ENCODE measurements at regions of chr14 and their contacts with region 1.

Region 1: GRCh38 chr14:68248481-68249255 is 429.1 kb downstream of the RAD51B start:
- DNase-seq: peak; percentile 80
- ATAC-seq: peak; percentile 83
- H3K4me3 ChIP-seq: no peak overlapping the region
- H3K4me3 Mint-ChIP-seq: peak overlapping the region; percentile 5
- H3K27ac ChIP-seq: peak overlapping the region; percentile 39 to 73
- H3K27ac Mint-ChIP-seq: peak overlapping the region; percentile 88
- H3K4me1 ChIP-seq: peaks cover 40 to 54% of the 10 kb centered on the region in 2 donors
- H3K4me1 Mint-ChIP-seq: peaks cover 65% of the 10 kb centered on the region
- H3K27me3 ChIP-seq: no peaks in the 10 kb centered on the region
- H3K27me3 Mint-ChIP-seq: no peaks in the 10 kb centered on the region
- CTCF ChIP-seq: peak; percentile 85

Region 2: DNA sequence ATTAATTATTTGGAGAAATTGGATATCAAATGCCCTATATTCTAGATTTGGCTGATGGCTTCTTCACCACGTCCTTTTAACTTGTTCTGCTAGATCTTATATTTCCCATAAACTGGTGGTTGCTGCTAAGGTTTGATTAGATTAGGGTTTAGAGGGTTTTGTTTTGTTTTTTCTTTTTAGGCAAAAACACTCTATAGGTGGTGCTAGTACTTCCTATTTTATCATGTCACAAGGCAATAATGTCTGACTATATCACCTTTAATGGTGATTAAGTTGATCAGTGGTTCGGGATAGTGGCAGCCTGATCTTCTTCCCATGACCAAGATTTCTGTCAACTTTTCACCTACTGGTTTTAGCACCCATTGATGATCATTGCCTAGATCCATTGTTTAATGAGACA is 26.1 kb after region 1 on chr14:
- CTCF ChIA-PET with region 1: interaction called, 110 read pairs
- POLR2A ChIA-PET with region 1: interaction called, 6 read pairs
- intact Hi-C with region 1: no loop called
- DNase-seq: peak; percentile 55
- ATAC-seq: no peak
- H3K4me3 ChIP-seq: peak overlapping the region in 1 of 5 experiments; percentile 12
- H3K4me3 Mint-ChIP-seq: peak overlapping the region; percentile 80
- H3K27ac ChIP-seq: peak overlapping the region; percentile 88 to 91
- H3K27ac Mint-ChIP-seq: peak overlapping the region; percentile 98
- H3K4me1 ChIP-seq: peaks cover 92 to 93% of the 10 kb centered on the region in 2 donors
- H3K4me1 Mint-ChIP-seq: peaks cover 87% of the 10 kb centered on the region
- H3K27me3 ChIP-seq: no peaks in the 10 kb centered on the region
- H3K27me3 Mint-ChIP-seq: no peaks in the 10 kb centered on the region
- CTCF ChIP-seq: peak; percentile 33

Region 3: DNA sequence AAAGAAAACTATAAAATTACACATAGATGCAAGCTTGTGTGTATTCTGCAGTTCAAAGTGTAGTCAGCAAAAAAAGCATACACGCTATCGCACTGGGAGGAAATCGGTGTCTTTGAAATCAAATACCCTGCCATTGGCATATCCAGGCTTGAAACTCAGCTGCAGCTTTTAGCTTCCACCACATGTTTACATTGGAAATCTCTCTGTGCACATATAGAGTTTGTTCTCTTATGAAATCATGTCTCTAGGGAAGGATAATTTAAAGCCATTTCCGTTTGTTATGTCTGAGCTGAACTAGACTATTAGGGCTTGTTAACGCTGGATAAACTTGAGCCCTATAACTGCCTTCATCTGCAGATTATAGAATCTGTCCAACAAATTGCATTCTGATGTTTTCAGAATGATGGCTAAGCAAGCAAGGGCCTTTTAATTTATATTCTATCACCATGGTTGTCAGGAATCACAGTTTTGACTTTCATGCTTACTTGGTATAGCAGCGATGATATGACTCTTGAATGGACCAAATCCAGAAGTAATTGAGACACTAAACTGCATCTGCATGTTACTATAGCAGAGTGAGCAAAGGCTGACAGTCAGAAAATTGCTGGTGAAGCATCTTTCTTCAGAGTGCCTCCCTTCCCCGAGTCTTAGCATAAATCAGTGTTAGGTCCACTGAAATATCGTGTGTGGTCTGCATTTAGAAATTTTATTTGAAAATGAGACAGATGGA is 101.4 kb after region 1 on chr14:
- CTCF ChIA-PET with region 1: interaction called, 32 read pairs
- POLR2A ChIA-PET with region 1: no interaction called
- intact Hi-C with region 1: no loop called
- DNase-seq: no peak
- ATAC-seq: no peak
- H3K4me3 ChIP-seq: no peak overlapping the region
- H3K4me3 Mint-ChIP-seq: no peak overlapping the region
- H3K27ac ChIP-seq: no peak overlapping the region
- H3K27ac Mint-ChIP-seq: no peak overlapping the region
- H3K4me1 ChIP-seq: peaks cover 7 to 13% of the 10 kb centered on the region in 2 donors
- H3K4me1 Mint-ChIP-seq: peaks cover 38% of the 10 kb centered on the region
- H3K27me3 ChIP-seq: no peaks in the 10 kb centered on the region
- H3K27me3 Mint-ChIP-seq: no peaks in the 10 kb centered on the region
- CTCF ChIP-seq: no peak

Region 4: DNA sequence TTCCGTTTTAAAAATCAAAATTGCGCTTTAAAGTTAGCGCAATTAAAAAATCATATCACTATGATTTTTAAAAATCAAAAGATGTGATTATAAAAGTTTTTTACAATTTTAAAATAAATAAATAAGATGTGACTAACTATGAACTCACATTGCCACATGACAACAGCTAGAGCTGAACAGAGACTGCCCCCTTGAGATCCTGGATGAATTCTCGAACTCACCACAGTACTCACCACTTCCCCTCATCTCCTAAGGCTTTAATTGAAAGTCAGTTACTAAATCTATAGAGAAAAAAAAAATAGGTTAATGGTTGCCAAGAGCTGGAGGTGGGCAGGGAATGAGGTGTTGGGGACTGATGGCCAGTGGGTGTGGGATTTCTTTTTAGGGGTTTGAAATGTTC is 160.0 kb after region 1 on chr14:
- CTCF ChIA-PET with region 1: interaction called, 31 read pairs
- POLR2A ChIA-PET with region 1: interaction called, 4 read pairs
- intact Hi-C with region 1: loop called (anchors 1 kb)
- DNase-seq: peak; percentile 62
- ATAC-seq: peak; percentile 46
- H3K4me3 ChIP-seq: no peak overlapping the region
- H3K4me3 Mint-ChIP-seq: no peak overlapping the region
- H3K27ac ChIP-seq: peak overlapping the region; percentile 30 to 60
- H3K27ac Mint-ChIP-seq: peak overlapping the region; percentile 84
- H3K4me1 ChIP-seq: peaks cover 57 to 60% of the 10 kb centered on the region in 2 donors
- H3K4me1 Mint-ChIP-seq: peaks cover 61% of the 10 kb centered on the region
- H3K27me3 ChIP-seq: no peaks in the 10 kb centered on the region
- H3K27me3 Mint-ChIP-seq: no peaks in the 10 kb centered on the region
- CTCF ChIP-seq: peak; percentile 24

Region 5: DNA sequence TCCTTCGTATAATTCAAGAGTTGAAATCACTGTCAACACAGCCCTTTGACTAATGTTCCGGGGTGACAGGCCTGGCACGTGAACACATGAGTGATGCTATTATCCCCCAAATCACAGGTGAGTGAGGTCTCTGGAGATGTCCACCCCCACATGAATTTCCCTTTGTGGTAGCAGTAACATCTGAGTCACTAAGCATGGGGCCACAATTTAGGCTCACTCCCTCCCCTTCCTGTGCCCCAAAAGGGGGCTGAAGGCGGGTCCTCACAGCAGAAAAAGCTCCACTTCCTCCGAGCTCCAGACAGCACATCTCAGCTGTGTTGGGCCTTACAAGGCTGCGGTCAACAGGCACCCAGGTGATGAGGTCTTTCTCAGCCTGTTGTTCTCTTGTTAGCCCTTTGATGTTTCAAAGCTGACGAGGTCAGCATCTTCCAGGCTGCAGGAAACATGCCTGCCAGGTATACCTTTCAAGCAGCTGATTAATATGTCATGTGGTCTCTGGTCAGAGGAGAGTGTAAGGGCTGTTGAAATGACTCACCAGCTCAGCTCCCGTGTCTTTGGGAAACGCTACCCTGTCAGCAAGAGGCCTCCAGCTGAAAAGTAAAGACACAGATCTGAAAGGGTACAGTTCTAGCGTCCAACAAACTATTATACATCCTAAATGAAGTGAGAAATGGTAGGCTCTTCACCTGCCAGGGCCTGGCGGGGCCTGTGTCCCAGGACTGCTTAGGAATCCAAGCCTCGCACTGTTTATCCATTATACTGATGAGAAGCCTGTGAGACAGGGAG is 436.9 kb after region 1 on chr14:
- CTCF ChIA-PET with region 1: interaction called, 16 read pairs
- POLR2A ChIA-PET with region 1: no interaction called
- intact Hi-C with region 1: loop called (anchors 1 kb)
- DNase-seq: peak; percentile 95
- ATAC-seq: peak; percentile 81
- H3K4me3 ChIP-seq: peak overlapping the region in 2 of 5 experiments; percentile 18 to 45
- H3K4me3 Mint-ChIP-seq: peak overlapping the region; percentile 82
- H3K27ac ChIP-seq: peak overlapping the region; percentile 94 to 98
- H3K27ac Mint-ChIP-seq: peak overlapping the region; percentile 99
- H3K4me1 ChIP-seq: peaks cover 70 to 83% of the 10 kb centered on the region in 2 donors
- H3K4me1 Mint-ChIP-seq: peaks cover 90% of the 10 kb centered on the region
- H3K27me3 ChIP-seq: no peaks in the 10 kb centered on the region
- H3K27me3 Mint-ChIP-seq: no peaks in the 10 kb centered on the region
- CTCF ChIP-seq: no peak

Region 6: DNA sequence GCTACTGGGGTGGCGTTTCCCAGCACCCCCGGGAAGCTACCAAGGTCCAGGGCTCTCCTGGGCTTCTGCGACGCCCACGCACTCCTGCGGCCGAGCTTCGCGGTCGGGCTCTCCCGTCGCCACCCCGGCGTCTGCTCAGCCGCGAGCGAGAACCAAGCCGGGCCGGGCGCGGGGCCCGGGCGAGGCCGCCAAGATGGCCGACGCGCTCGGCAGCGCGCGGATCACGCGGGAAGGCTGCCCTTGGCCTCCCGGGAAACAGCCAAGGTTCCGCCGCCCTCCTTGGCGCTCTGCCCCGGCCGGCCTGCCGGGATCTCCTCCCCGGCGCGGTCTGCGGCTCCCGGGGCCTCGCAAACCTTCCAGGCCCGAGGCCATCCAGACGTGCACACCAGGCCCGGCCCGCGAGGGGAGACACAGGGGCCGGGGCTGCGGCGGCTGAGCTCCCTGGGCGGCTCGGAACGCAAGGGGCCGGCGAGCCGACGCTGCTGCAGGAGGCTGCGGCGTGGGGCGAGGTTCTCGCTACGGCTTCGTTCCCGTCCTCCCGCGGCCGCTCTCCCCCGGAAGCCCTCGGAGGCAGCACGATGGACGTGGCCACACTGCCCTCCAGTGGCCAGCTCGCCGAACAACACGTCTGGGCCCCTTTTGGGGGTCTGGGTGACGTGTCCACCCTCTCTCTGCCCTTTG is 567.7 kb after region 1 on chr14:
- CTCF ChIA-PET with region 1: interaction called, 241 read pairs
- POLR2A ChIA-PET with region 1: interaction called, 44 read pairs
- intact Hi-C with region 1: loop called (anchors 1 kb)
- DNase-seq: peak; percentile 94
- ATAC-seq: peak; percentile 73
- H3K4me3 ChIP-seq: peak overlapping the region; percentile 51 to 80 (median 74)
- H3K4me3 Mint-ChIP-seq: peak overlapping the region; percentile 87
- H3K27ac ChIP-seq: peak overlapping the region; percentile 89 to 94
- H3K27ac Mint-ChIP-seq: peak overlapping the region; percentile 98
- H3K4me1 ChIP-seq: peaks cover 56 to 70% of the 10 kb centered on the region in 2 donors
- H3K4me1 Mint-ChIP-seq: peaks cover 82% of the 10 kb centered on the region
- H3K27me3 ChIP-seq: no peaks in the 10 kb centered on the region
- H3K27me3 Mint-ChIP-seq: no peaks in the 10 kb centered on the region
- CTCF ChIP-seq: peak; percentile 97

Measured in B cell (primary cell).